ENCODE measurements at regions of chr19 and their contacts with region 1.

Region 1: DNA sequence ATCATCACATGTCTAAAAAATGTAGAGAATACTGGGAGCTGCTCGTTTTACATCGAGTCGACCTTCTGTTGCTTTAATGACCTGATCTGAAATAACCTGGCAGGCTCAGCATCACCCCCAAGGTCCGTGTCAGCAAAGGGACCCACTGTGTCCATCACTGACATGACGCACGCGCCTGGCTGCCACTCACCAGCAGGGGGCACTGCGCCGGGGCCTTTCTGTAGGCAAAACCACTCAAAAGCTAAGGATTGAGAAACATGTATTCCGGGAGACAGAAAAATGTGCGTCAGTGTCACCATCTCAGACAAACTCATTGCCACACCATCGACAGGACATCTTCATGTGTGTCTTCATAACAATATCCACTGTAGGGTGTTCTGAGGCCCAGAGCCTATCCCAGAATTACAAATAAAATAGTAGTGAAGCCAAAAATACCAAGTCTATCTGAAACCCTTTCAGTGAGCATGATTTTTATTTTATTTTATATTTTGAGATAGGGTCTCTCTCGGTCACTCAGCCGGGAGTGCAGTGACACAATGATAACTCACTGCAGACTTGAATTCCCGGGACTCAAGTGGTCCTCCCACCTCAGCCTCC is 130.3 kb upstream of the LSM14A start:
- DNase-seq: no peak
- H3K4me3 ChIP-seq: no peak overlapping the region
- H3K27ac ChIP-seq: no peak overlapping the region
- H3K4me1 ChIP-seq: no peaks in the 10 kb centered on the region
- H3K27me3 ChIP-seq: peaks cover 0 to 4% (median 0%) of the 10 kb centered on the region in 4 donors
- CTCF ChIP-seq: peak; percentile 49 to 72 (median 67)
- EP300 ChIP-seq: no peak
- POLR2A ChIP-seq: no peak

Region 2: GRCh38 chr19:34145741-34146202 is 103.7 kb after region 1 on chr19:
- intact Hi-C with region 1: loop called (anchors 5 kb)
- DNase-seq: no peak
- H3K4me3 ChIP-seq: no peak overlapping the region
- H3K27ac ChIP-seq: no peak overlapping the region
- H3K4me1 ChIP-seq: no peaks in the 10 kb centered on the region
- H3K27me3 ChIP-seq: no peaks in the 10 kb centered on the region
- CTCF ChIP-seq: peak; percentile 70 to 90 (median 80)
- EP300 ChIP-seq: no peak
- POLR2A ChIP-seq: no peak